ENCODE measurements at regions of chr1 and their contacts with region 1.

Region 1: GRCh38 chr1:175154629-175155472 is 37.7 kb downstream of the KIAA0040 start:
- DNase-seq: peak; percentile 83
- ATAC-seq: peak; percentile 63

Region 2: DNA sequence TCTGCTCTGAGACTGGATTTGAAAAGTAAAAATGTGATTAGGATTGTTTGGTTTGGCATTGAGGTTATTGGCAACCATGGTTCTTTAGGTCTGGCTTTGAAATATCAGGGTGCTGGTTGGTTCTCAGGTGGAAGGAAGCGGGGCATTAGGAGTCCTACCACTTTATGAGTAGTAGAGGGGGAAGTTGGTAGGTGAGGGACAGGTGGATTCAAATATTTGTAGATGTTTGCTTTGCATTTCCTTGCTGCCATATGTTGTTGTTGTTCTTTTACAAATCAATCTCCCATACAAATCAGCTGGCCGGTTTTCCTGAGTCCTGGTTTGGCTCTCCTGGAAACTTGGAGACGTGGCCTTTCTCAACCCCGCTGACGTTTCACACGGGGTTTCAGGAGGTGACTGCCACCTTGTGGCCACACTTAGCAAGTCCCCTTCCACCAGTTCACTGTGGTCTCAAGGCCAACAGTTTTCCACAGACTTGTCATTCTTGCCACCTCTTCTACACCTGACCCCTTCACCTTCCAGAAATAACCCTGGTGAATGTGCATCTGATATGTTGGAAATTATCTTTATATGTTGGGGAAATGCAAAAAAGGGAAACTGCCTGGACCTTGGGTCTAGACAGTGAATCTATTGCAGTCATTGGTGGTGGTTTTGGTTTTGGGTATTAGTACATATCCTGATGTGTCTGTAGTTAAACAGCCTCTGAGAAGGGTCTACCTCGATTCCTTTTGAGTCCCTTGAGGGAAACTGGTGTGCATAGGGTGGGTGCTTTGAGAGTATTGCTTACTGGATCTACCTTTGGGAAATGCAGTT is 164.8 kb after region 1 on chr1:
- intact Hi-C with region 1: loop called (anchors 2 kb)
- DNase-seq: peak; percentile 83
- ATAC-seq: peak; percentile 81